ENCODE measurements at regions of chr19 and their contacts with region 1.

Region 1: DNA sequence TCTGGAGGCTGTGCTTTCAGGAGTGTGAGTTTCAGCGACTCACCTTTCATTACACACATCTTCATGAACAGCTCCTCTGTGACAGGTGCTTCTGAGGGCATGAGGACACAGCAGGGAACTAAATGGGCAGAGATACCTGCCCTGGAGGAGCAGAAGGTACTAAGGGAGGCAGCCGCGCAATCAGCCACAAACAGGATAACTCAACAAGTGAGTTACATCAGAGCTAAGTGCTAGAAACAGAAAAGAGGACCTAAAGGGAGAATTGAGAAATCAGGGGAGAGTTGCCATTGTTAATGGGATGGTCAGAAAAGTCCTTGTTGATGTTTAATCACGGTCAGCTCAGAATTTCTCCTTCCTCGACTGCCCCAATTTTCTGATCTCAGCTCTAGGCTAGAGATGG is 42.5 kb downstream of the SYDE1 start:
- DNase-seq: no peak
- ATAC-seq: no peak

Region 2: GRCh38 chr19:15091901-15092753 is 57.6 kb before region 1 on chr19:
- intact Hi-C with region 1: loop called (anchors 2 kb)
- DNase-seq: no peak
- ATAC-seq: no peak

Region 3: DNA sequence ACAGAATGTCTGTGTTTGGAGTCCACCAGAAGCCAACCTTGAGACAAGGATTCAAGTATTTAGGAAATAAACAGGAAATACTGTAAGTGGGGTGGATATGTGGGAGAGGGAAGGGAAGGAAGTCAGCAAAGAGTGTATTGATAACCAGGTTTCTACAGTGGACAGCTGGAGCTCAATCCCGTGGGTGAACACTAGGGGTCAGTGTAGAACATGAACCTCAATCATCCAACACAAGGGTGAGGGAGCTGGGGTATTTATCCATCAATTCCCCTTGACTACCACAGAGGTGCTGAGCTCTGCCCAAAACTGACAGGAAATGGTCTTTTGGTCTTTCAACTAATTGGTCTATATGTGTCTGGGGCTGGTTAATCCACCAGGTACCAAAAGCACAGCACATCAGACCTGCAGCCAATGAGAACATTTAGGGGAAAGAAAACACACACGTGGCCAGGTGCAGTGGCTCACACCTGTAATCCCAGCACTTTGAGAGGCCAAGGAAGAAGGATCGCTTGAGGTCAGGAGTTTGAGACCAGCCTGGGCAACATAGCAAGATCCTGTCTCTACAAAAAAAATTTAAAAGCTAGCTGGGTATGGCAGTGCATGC is 48.2 kb before region 1 on chr19:
- intact Hi-C with region 1: loop called (anchors 2 kb)
- DNase-seq: no peak
- ATAC-seq: peak; percentile 60

Measured in Right ventricle myocardium inferior (tissue), 1 donor.